ENCODE measurements at regions of chr7 and their contacts with region 1.

Region 1: DNA sequence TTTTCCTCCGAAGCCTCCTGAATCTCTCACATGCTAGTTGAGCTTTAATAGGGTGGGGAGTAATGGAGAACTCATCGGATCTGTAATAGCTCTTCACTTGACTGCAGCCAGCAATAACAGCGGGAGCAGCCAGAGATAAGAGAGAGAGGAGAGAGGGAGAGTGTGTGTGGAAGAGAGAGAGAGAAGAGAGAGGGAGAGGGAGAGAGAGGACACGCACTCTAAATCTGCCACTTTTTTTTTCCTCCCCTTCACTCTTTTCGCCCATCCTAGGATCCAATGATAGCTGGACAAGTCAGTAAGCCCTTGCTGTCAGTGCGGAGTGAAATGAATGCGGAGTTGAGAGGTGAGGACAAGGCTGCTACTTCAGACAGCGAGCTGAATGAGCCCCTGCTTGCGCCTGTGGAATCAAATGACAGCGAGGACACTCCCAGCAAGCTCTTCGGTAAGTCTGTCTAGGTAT is 107.9 kb downstream of the POU6F2 start:
- DNase-seq: peak in 6 of 10 donors; percentile 22 to 56 (median 44)
- H3K4me3 ChIP-seq: peak overlapping the region in 58 of 59 donors; percentile 1 to 63 (median 47)
- H3K27ac ChIP-seq: peak overlapping the region in 55 of 59 donors; percentile 3 to 85 (median 66)
- H3K27me3 ChIP-seq: peaks cover 0 to 27% (median 0%) of the 10 kb centered on the region in 45 donors
- CTCF ChIP-seq: no peak

Region 2: DNA sequence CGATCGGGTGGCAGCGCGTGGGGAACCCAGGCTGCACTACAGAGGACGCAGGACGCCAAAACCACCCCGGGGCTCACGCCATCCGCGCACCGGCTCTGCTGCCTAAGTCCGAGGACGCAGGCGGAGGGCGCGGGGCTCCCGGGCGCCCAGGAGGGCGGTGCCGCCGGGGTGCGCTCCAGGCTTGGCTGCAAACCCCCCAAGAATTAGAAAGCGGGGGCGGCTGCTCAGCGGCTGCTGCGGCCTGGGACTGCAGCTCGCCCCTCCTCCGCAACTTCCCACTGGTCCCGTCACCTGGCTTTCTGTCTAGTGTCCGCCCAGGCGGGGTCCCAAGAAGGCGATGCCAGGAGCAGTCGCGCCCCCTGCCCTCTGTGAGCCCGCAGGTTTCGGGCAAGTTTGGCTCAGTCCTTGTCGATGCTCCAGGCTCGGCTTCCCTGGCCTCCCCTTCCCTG is 109.7 kb before region 1 on chr7:
- intact Hi-C with region 1: loop called in 1 of 2 experiments (anchors 10 kb)
- DNase-seq: peak in 5 of 10 donors; percentile 19 to 51 (median 36)
- H3K4me3 ChIP-seq: peak overlapping the region in 58 of 59 donors; percentile 6 to 70 (median 53)
- H3K27ac ChIP-seq: peak overlapping the region in 55 of 59 donors; percentile 8 to 91 (median 68)
- H3K27me3 ChIP-seq: peaks cover 0 to 52% (median 7%) of the 10 kb centered on the region in 45 donors
- CTCF ChIP-seq: no peak